K562 (cell line): ENCODE measurements at regions of chr19 and their contacts with region 1.

Region 1: DNA sequence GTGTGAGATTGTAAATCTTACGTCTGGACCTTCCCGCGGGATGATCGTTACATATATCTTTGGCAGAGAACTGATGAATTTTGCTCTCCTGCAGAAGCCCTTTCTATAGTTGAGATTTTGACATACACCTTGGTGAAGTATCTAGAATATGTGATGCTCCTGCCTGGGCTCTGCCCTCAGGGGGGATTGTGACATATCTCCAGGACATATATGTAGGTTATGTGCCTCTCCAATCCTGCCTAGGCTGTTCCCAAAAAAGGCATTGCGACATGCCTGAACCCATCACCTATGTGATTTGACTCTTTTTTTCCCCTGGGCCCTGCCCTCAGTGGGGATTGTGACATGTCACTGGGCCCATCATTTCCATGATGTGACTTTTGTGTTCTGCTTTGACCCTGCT is 76.6 kb downstream of the ZNF208 start:
- DNase-seq: no peak
- ATAC-seq: no peak
- H3K4me3 ChIP-seq: no peak overlapping the region
- H3K27ac ChIP-seq: no peak overlapping the region
- H3K4me1 ChIP-seq: no peaks in the 10 kb centered on the region
- H3K27me3 ChIP-seq: no peaks in the 10 kb centered on the region
- CTCF ChIP-seq: no peak
- EP300 ChIP-seq: no peak
- POLR2A ChIP-seq: no peak
- RAD21 ChIP-seq: no peak

Region 2: GRCh38 chr19:21878646-21879045 is 55.5 kb before region 1 on chr19:
- CTCF ChIA-PET with region 1: no interaction called
- POLR2A ChIA-PET with region 1: no interaction called
- in situ Hi-C with region 1: no loop called
- intact Hi-C with region 1: no loop called
- DNase-seq: no peak
- ATAC-seq: no peak
- H3K4me3 ChIP-seq: no peak overlapping the region
- H3K27ac ChIP-seq: no peak overlapping the region
- H3K4me1 ChIP-seq: no peaks in the 10 kb centered on the region
- H3K27me3 ChIP-seq: no peaks in the 10 kb centered on the region
- CTCF ChIP-seq: no peak
- EP300 ChIP-seq: no peak
- POLR2A ChIP-seq: no peak
- RAD21 ChIP-seq: no peak

Region 3: GRCh38 chr19:22935151-22935550 is 1001.0 kb after region 1 on chr19:
- CTCF ChIA-PET with region 1: no interaction called
- POLR2A ChIA-PET with region 1: no interaction called
- in situ Hi-C with region 1: loop called (anchors 5 kb)
- intact Hi-C with region 1: no loop called
- DNase-seq: no peak
- ATAC-seq: no peak
- H3K4me3 ChIP-seq: no peak overlapping the region
- H3K27ac ChIP-seq: no peak overlapping the region
- H3K4me1 ChIP-seq: no peaks in the 10 kb centered on the region
- H3K27me3 ChIP-seq: no peaks in the 10 kb centered on the region
- CTCF ChIP-seq: no peak
- EP300 ChIP-seq: no peak
- POLR2A ChIP-seq: no peak
- RAD21 ChIP-seq: no peak